Testis (tissue), 5 donors: ENCODE measurements at regions of chr6 and their contacts with region 1.

Region 1: DNA sequence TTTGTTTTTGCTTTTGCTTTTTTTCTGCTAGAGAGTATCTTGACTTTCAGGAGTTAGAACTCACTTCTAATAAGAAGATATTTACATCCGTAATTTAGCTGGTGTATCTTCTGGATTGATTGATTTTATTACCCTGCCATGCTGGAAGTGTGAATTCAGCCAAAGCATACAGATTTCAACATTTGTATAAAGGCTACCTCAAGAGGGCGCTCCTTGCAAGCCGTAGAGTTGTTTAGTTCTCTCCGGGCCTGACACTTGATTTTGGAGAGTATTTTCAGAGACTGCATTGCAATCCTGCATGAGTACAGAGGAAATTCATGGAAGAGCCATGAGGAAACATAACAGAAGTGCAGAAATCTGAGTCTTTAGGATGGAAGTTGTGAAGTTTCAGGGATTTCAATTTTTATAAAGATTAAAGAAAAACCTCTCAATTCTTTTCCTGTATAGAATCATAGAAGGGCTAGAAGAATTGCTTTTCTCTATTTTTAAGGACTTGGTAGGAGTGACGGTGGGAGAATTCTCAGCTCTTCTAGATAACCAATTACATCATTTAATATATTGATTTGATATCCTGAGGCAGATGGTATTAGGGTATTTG is 66.7 kb upstream of the TIAM2 start:
- DNase-seq: peak; percentile 78
- H3K4me3 ChIP-seq: no peak overlapping the region
- H3K27ac ChIP-seq: no peak overlapping the region
- H3K4me1 ChIP-seq: no peaks in the 10 kb centered on the region
- H3K27me3 ChIP-seq: no peaks in the 10 kb centered on the region
- CTCF ChIP-seq: peak; percentile 61 to 75 (median 72)
- POLR2A ChIP-seq: no peak

Region 2: DNA sequence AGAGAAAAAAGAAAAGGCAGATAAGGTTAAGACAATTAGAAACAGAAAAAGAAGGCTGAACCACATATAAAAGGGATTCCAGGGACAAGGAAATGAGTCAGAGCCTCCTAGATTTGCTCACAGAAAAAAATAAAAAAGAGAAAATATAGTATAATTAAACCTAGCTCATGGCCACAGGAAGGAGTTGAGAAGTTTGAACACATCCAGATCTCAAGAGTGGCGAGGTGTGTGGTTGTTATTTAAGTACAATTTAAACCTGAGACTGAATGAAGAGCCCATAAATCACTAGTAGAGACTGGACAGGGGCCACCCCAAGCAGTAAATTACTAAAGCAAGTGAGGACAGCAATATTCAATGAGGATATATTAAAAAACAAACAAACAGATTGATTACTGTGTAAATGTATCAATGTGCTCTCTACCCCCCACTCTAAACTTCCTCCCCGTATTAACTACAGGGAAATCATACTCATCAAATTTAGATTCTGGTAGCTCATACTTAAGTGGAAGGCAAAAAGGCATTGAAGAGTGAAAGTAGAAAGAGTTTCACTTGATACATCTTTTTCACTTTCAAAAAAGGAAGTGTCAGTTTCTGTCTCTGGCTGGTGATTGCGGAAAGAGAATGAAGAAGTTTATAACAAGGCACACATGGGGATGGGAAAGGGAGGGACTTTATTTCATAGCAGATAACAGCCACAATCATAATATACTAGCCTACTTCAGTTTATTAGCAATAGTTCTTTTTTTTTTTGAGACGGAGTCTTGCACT is 244.5 kb before region 1 on chr6:
- intact Hi-C with region 1: loop called (anchors 10 kb)
- DNase-seq: no peak
- H3K4me3 ChIP-seq: no peak overlapping the region
- H3K27ac ChIP-seq: no peak overlapping the region
- H3K4me1 ChIP-seq: no peaks in the 10 kb centered on the region
- H3K27me3 ChIP-seq: no peaks in the 10 kb centered on the region
- CTCF ChIP-seq: no peak
- POLR2A ChIP-seq: no peak

Region 3: GRCh38 chr6:155174576-155175211 is 246.3 kb after region 1 on chr6:
- intact Hi-C with region 1: loop called (anchors 5 kb)
- DNase-seq: peak; percentile 70
- H3K4me3 ChIP-seq: no peak overlapping the region
- H3K27ac ChIP-seq: no peak overlapping the region
- H3K4me1 ChIP-seq: no peaks in the 10 kb centered on the region
- H3K27me3 ChIP-seq: no peaks in the 10 kb centered on the region
- CTCF ChIP-seq: peak; percentile 41 to 45 (median 41)
- POLR2A ChIP-seq: no peak